ENCODE measurements at regions of chr19 and their contacts with region 1.

Region 1: GRCh38 chr19:50147462-50148423 is 15.3 kb downstream of the IZUMO2 start:
- DNase-seq: peak; percentile 90 to 96
- ATAC-seq: peak; percentile 92 to 95
- H3K4me3 ChIP-seq: peak overlapping the region; percentile 53
- H3K27ac ChIP-seq: peak overlapping the region in 1 of 2 experiments; percentile 70; a peak in 3 of 6 replicates
- H3K4me1 ChIP-seq: peaks cover 3% of the 10 kb centered on the region; the same call in 1 of the 3 replicates
- CTCF ChIP-seq: peak; percentile 89
- EP300 ChIP-seq: no peak
- POLR2A ChIP-seq: no peak
- RAD21 ChIP-seq: peak; percentile 88 to 93

Region 2: GRCh38 chr19:49983645-49984229 is 164.0 kb before region 1 on chr19:
- CTCF ChIA-PET with region 1: no interaction called
- POLR2A ChIA-PET with region 1: no interaction called
- DNase-seq: peak; percentile 57 to 70
- ATAC-seq: peak; percentile 55 to 84; a peak in 5 of 6 replicates
- H3K4me3 ChIP-seq: no peak overlapping the region
- H3K27ac ChIP-seq: no peak overlapping the region
- H3K4me1 ChIP-seq: no peaks in the 10 kb centered on the region
- CTCF ChIP-seq: peak; percentile 92
- EP300 ChIP-seq: no peak
- POLR2A ChIP-seq: no peak
- RAD21 ChIP-seq: peak; percentile 73 to 88

Region 3: DNA sequence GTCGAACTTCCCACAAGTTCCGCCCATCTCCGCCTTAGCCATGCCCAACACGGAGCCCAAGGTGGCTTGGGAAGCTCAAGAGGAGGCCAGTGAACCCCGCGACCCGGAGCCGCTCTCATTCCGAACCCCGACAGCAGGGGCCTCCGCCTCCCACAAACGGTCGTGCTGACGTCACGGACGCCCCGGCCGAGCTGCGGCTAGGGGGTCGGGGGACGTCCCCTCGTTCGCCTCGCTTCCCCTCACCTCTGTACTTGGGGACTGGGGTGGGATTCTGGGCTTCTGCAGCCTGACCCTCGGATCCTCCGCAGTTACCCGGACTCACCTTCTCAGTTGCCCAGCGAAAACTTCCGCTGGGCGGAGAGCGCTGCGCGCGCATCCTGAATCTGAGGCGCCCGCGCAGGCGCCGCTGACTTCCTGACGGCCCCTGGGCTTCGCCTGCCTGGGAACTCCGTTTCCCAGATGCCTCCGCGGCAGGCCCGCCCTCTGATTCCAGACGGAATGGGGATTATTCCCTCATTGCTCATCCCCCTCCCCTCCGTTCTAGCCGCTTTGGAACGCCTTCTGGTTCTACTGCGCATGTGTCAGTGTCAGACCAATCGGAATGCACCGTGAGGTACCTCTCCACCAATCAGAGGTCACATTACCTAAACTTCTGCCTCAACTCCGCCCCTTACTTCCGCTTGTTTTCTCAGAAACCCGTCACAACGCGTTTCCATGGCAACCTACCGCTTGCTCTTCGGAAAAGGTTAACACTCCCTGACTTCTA is 122.5 kb before region 1 on chr19 and contains the start of gene VRK3:
- CTCF ChIA-PET with region 1: no interaction called
- POLR2A ChIA-PET with region 1: no interaction called
- DNase-seq: peak; percentile 100
- ATAC-seq: peak; percentile 88 to 94
- H3K4me3 ChIP-seq: peak within 1 kb of the TSS; percentile 77
- H3K27ac ChIP-seq: peak within 1 kb of the TSS; percentile 87 to 92
- H3K4me1 ChIP-seq: peaks cover 20% of the 10 kb centered on the region
- CTCF ChIP-seq: no peak
- EP300 ChIP-seq: no peak
- POLR2A ChIP-seq: peak; percentile 81
- RAD21 ChIP-seq: no peak; a peak in 1 of 5 replicates
- polyA plus RNA-seq, gene VRK3: 37.4 and 45.2 TPM in 2 replicates

Region 4: GRCh38 chr19:50178859-50179537 is 31.3 kb after region 1 on chr19:
- CTCF ChIA-PET with region 1: interaction called, 15 read pairs
- POLR2A ChIA-PET with region 1: no interaction called
- DNase-seq: no peak
- ATAC-seq: no peak
- H3K4me3 ChIP-seq: no peak overlapping the region
- H3K27ac ChIP-seq: no peak overlapping the region
- H3K4me1 ChIP-seq: peaks cover 4% of the 10 kb centered on the region; the same call in 2 of the 3 replicates
- CTCF ChIP-seq: no peak
- EP300 ChIP-seq: no peak
- POLR2A ChIP-seq: no peak
- RAD21 ChIP-seq: no peak

Region 5: GRCh38 chr19:50230379-50231351 is 82.9 kb after region 1 on chr19:
- CTCF ChIA-PET with region 1: interaction called, 16 read pairs
- POLR2A ChIA-PET with region 1: no interaction called
- DNase-seq: no peak
- ATAC-seq: peak; percentile 14 to 44; a peak in 3 of 6 replicates
- H3K4me3 ChIP-seq: no peak overlapping the region
- H3K27ac ChIP-seq: no peak overlapping the region
- H3K4me1 ChIP-seq: peaks cover 8% of the 10 kb centered on the region; the same call in 2 of the 3 replicates
- CTCF ChIP-seq: no peak
- EP300 ChIP-seq: no peak
- POLR2A ChIP-seq: no peak
- RAD21 ChIP-seq: no peak

Region 6: GRCh38 chr19:50292216-50292827 is 144.6 kb after region 1 on chr19:
- CTCF ChIA-PET with region 1: interaction called, 11 read pairs
- POLR2A ChIA-PET with region 1: no interaction called
- DNase-seq: no peak
- ATAC-seq: no peak
- H3K4me3 ChIP-seq: no peak overlapping the region
- H3K27ac ChIP-seq: no peak overlapping the region
- H3K4me1 ChIP-seq: no peaks in the 10 kb centered on the region
- CTCF ChIP-seq: no peak
- EP300 ChIP-seq: no peak
- POLR2A ChIP-seq: no peak
- RAD21 ChIP-seq: no peak

Region 7: GRCh38 chr19:50329146-50329925 is 181.6 kb after region 1 on chr19 and contains the start of gene KCNC3:
- CTCF ChIA-PET with region 1: interaction called, 76 read pairs
- POLR2A ChIA-PET with region 1: interaction called, 9 read pairs
- DNase-seq: peak; percentile 99 to 100
- ATAC-seq: peak; percentile 54 to 83
- H3K4me3 ChIP-seq: peak within 1 kb of the TSS; percentile 60
- H3K27ac ChIP-seq: peak within 1 kb of the TSS; percentile 50 to 75; a peak in 5 of 6 replicates
- H3K4me1 ChIP-seq: peaks cover 45% of the 10 kb centered on the region
- CTCF ChIP-seq: no peak
- EP300 ChIP-seq: no peak
- POLR2A ChIP-seq: no peak; the same call in 1 of the 2 replicates
- RAD21 ChIP-seq: no peak
- polyA plus RNA-seq, gene KCNC3: 0.17 and 0.32 TPM in 2 replicates

Measured in A549 (cell line).